Posterior vena cava (tissue), 2 donors: ENCODE measurements at regions of chr10 and their contacts with region 1.

Region 1: GRCh38 chr10:122461367-122461728 is at the start of gene HTRA1:
- DNase-seq: peak; percentile 92
- total RNA-seq, gene HTRA1: 152 to 276 TPM

Region 2: GRCh38 chr10:122504610-122504950 is 43.2 kb after region 1 on chr10:
- intact Hi-C with region 1: loop called (anchors 1 to 5 kb)
- DNase-seq: peak; percentile 96

Region 3: GRCh38 chr10:122565728-122566206 is 104.4 kb after region 1 on chr10:
- intact Hi-C with region 1: loop called (anchors 10 kb)
- DNase-seq: peak; percentile 92

Region 4: GRCh38 chr10:122571892-122572291 is 110.5 kb after region 1 on chr10:
- intact Hi-C with region 1: loop called (anchors 10 kb)
- DNase-seq: peak; percentile 18

Region 5: GRCh38 chr10:122630526-122630925 is 169.2 kb after region 1 on chr10:
- intact Hi-C with region 1: no loop called
- DNase-seq: no peak

Region 6: DNA sequence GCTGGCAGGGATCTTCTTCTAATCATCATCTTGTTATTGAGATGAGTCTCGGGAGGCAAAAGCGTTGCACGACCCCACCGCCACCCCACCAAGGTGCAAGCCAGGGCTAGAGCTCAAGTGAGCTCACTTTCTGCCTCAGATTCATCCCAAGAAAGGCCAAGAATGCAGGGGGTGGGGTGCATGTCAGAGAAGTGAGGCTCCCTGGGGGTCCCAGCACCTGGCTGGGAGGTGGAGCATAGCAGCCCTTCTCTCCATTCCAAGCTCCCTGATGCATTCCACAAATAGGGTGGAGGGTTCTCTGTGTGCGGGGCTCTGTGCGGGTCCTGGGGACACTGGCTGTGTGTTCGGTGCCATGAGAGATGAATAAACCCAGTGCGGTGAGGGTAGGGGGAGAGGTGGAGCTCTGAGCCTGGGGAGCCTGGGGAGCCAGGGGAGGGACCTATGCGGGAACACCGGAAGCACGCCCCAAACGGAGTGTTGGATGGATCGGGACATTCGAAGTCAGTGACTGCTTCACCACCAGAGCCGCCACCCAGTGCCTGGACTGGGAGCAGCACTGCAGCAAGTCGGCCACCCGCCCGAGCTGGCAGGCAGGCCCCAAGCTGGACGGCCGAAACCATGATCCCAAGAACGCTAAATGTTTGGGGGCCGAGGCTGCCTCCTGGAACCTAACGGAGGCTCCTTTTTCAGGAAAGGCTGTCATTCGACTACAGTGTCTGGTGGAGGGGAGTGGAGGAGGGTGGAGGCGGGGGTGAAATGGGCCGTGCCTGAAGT is 656.5 kb after region 1 on chr10:
- intact Hi-C with region 1: loop called in 1 of 2 experiments (anchors 5 kb)
- DNase-seq: no peak